ENCODE measurements at regions of chr18 and their contacts with region 1.

Region 1: DNA sequence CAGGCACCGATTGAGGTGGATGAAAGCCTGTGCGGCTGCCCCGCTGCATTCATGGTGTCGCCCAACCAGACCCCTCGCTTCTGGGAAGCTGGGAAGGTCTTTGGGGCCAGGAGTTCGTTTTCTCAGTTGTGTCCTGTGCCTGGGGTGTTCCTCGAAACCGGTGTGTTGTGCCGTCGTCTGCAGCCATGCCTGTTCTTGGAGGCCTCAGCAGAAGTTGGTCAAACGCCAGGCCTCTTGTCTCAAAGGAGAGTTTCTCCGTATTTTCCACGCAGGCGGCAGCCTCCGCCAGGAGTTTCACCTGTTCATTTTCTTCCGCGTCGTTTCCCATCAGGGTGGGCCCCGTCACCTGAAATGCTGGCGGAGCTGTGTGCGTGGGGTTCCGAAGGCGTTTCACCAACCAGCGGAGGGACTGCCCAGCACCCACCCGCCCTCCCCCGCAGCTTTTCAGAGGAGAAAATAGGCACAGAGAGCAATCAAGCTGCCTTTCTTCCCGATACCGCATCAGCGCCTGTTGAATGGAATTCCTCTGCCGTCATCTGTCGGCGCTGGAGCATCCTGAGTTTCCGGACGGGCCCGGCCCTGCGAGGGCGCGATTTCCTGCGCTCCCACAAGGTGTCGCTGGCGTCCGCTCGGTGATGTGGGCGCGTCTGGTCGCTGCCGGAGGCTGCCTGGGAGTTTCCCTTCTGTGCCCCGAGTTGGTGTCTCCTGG is 17.0 kb upstream of the NFATC1 start:
- DNase-seq: peak; percentile 47 to 83 (median 70)
- H3K4me3 ChIP-seq: no peak overlapping the region
- H3K27ac ChIP-seq: no peak overlapping the region
- H3K4me1 ChIP-seq: no peaks in the 10 kb centered on the region
- H3K27me3 ChIP-seq: no peaks in the 10 kb centered on the region
- CTCF ChIP-seq: peak; percentile 66 to 92 (median 83)
- POLR2A ChIP-seq: no peak

Region 2: GRCh38 chr18:79439201-79440023 is 60.7 kb after region 1 on chr18:
- intact Hi-C with region 1: loop called in 1 of 2 experiments (anchors 10 kb)
- DNase-seq: no peak
- H3K4me3 ChIP-seq: no peak overlapping the region
- H3K27ac ChIP-seq: no peak overlapping the region
- H3K4me1 ChIP-seq: no peaks in the 10 kb centered on the region
- H3K27me3 ChIP-seq: no peaks in the 10 kb centered on the region
- CTCF ChIP-seq: no peak
- POLR2A ChIP-seq: no peak

Region 3: GRCh38 chr18:79528846-79529245 is 150.2 kb after region 1 on chr18:
- intact Hi-C with region 1: loop called (anchors 2 to 5 kb)
- DNase-seq: peak; percentile 47 to 76 (median 62)
- H3K4me3 ChIP-seq: no peak overlapping the region
- H3K27ac ChIP-seq: no peak overlapping the region
- H3K4me1 ChIP-seq: no peaks in the 10 kb centered on the region
- H3K27me3 ChIP-seq: no peaks in the 10 kb centered on the region
- CTCF ChIP-seq: peak; percentile 61 to 86 (median 71)
- POLR2A ChIP-seq: no peak

Region 4: DNA sequence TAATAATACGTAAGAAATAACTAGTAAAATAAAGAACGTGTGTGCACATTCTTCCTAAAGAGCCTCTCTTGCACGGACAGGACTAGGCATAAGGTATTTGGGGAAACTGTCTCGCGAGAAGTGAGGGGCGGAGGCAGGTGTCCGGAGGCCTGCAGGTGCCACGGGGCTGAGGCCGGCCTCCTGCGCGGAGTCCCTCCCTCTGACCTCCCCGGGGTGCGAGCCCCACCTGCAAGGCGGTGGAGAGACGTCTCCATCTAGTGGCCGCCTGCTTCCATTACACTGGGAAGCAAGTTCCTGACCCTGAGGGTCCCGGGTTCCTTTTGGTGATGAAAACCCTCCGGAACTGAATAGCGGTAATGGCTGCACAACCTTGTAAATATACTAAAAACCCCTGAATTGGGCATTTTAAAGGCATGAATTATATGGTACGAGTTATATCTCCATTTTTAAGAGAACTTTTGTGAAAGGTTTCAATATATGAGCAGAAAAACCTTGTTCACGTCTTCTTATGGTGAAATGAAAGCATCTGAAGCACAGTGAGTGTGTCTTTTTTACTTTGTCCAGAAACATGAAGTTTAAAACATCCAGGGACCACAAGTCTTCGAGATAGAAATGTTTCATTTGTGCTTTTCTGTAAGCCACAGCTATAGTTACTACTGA is 265.4 kb after region 1 on chr18:
- intact Hi-C with region 1: loop called (anchors 2 to 5 kb)
- DNase-seq: peak; percentile 31 to 71 (median 58)
- H3K4me3 ChIP-seq: no peak overlapping the region
- H3K27ac ChIP-seq: no peak overlapping the region
- H3K4me1 ChIP-seq: no peaks in the 10 kb centered on the region
- H3K27me3 ChIP-seq: peaks cover 12% of the 10 kb centered on the region
- CTCF ChIP-seq: peak; percentile 76 to 98 (median 90)
- POLR2A ChIP-seq: no peak

Measured in adrenal gland (tissue), 19 donors.